Activated CD4-positive, alpha-beta memory T cell treated with anti-CD3 and anti-CD28 coated beads, Interleukin-2, amount 10 ng/mL, durations not matched to agents 7 days and 5 days (primary cell): ENCODE measurements at regions of chr17 and their contacts with region 1.

Region 1: DNA sequence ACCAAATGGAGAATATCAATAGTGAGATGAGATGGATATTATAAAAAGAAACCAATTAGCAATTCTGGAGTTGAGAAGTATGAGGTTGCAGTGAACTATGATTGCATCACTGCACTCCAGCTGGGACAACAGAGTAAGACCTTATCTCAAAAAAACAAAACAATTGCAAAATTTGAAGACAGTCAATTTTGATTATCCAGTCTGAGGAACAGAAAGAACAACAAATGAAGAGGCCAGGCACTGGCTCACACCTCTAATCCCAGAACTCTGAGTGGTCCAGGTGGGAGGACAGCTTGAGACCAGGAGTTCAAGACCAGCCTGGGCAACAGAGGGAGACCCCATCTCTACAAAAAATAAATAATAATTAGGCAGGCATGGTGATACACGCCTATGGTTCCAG is 35.0 kb downstream of the USP32 start:
- DNase-seq: no peak
- H3K4me3 Mint-ChIP-seq: no peak overlapping the region
- H3K27ac Mint-ChIP-seq: peak overlapping the region; percentile 56
- H3K4me1 Mint-ChIP-seq: peaks cover 44% of the 10 kb centered on the region
- H3K27me3 Mint-ChIP-seq: no peaks in the 10 kb centered on the region

Region 2: GRCh38 chr17:60392042-60392844 is 35.3 kb after region 1 on chr17 and contains the start of gene USP32:
- CTCF ChIA-PET with region 1: interaction called, 5 read pairs
- POLR2A ChIA-PET with region 1: interaction called, 17 read pairs
- DNase-seq: peak; percentile 99
- H3K4me3 Mint-ChIP-seq: peak within 1 kb of the TSS; percentile 94
- H3K27ac Mint-ChIP-seq: peak within 1 kb of the TSS; percentile 90
- H3K4me1 Mint-ChIP-seq: peaks cover 46% of the 10 kb centered on the region
- H3K27me3 Mint-ChIP-seq: no peaks in the 10 kb centered on the region
- total RNA-seq, gene USP32: 35.8 to 40.1 TPM

Region 3: GRCh38 chr17:60598001-60598736 is 241.2 kb after region 1 on chr17:
- CTCF ChIA-PET with region 1: no interaction called
- POLR2A ChIA-PET with region 1: no interaction called
- DNase-seq: no peak
- H3K4me3 Mint-ChIP-seq: peak overlapping the region; percentile 40
- H3K27ac Mint-ChIP-seq: no peak overlapping the region
- H3K4me1 Mint-ChIP-seq: peaks cover 33% of the 10 kb centered on the region
- H3K27me3 Mint-ChIP-seq: no peaks in the 10 kb centered on the region